Activated B cell treated with CpG ODN at 0.5 μM for 24 hours (primary cell): ENCODE measurements at regions of chr2 and their contacts with region 1.

Region 1: DNA sequence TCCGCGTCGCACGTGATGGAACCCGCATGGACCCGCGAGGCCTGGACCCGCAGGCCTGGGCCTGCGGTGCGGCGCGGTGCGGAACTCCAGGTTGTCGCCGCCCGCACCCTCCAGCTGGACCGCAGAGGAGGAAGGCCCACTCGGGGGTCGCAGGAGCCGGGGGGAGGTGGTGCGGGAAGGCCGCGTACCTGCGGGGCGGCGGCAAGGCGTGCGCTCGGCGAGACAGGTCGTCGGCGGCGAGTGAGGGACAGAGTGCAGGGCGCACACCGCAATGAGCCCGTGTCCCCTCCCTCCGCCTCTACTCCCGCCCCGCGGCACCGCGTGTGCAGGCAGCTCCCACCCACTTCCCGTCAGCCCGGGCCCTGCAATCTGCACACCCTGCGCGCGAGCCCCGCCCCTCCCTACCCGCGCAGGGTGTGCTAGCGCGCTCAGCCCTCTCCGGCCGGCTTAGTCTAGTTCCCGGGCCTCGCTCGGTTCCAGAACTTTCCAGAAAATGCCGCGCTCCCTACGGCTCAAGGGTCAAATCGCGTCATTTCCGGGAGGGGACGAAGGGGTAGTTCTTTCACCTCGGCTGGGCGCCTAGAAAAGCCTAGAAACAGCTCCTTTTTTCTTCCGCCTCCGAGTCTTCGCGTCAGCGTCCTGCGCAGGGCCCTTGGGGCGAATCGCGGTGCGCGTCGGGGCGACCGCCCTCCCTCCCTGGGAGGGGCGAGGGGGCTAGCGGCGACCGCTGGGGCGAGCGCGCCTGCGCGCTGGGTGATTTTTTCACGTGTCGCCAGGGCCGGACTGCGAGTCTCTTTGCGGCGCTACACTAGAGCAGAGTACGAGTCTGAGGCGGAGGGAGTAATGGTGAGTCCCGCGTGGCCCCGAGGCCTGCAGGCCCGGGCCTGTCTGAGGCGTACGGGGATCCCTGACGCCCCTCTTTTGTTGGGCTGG is at the starts of genes HSPD1 and HSPE1:
- DNase-seq: peak; percentile 93
- ATAC-seq: peak; percentile 84
- H3K4me3 Mint-ChIP-seq: peak within 1 kb of the TSS; percentile 97
- H3K27ac Mint-ChIP-seq: peak within 1 kb of the TSS; percentile 94
- H3K4me1 Mint-ChIP-seq: peaks cover 59% of the 10 kb centered on the region
- H3K27me3 Mint-ChIP-seq: no peaks in the 10 kb centered on the region
- CTCF ChIP-seq: no peak
- total RNA-seq, gene HSPD1: 250 and 252 TPM in 2 replicates
- total RNA-seq, gene HSPE1: 108 and 116 TPM in 2 replicates

Region 2: GRCh38 chr2:196639180-196640030 is 860.5 kb before region 1 on chr2 and contains the start of gene CCDC150:
- CTCF ChIA-PET with region 1: no interaction called
- POLR2A ChIA-PET with region 1: interaction called, 3 read pairs
- intact Hi-C with region 1: loop called (anchors 1 kb)
- DNase-seq: peak; percentile 90
- ATAC-seq: peak; percentile 100
- H3K4me3 Mint-ChIP-seq: peak within 1 kb of the TSS; percentile 89
- H3K27ac Mint-ChIP-seq: peak within 1 kb of the TSS; percentile 53
- H3K4me1 Mint-ChIP-seq: peaks cover 14% of the 10 kb centered on the region
- H3K27me3 Mint-ChIP-seq: no peaks in the 10 kb centered on the region
- CTCF ChIP-seq: no peak
- total RNA-seq, gene CCDC150: 2.3 and 2.6 TPM in 2 replicates

Region 3: GRCh38 chr2:196926562-196927375 is 573.1 kb before region 1 on chr2 and contains the start of gene PGAP1:
- CTCF ChIA-PET with region 1: no interaction called
- POLR2A ChIA-PET with region 1: no interaction called
- intact Hi-C with region 1: loop called (anchors 5 kb)
- DNase-seq: peak; percentile 82
- ATAC-seq: peak; percentile 91
- H3K4me3 Mint-ChIP-seq: peak within 1 kb of the TSS; percentile 90
- H3K27ac Mint-ChIP-seq: peak within 1 kb of the TSS; percentile 86
- H3K4me1 Mint-ChIP-seq: peaks cover 21% of the 10 kb centered on the region
- H3K27me3 Mint-ChIP-seq: peaks cover 13% of the 10 kb centered on the region
- CTCF ChIP-seq: no peak
- total RNA-seq, gene PGAP1: 1.9 and 2.9 TPM in 2 replicates

Region 4: GRCh38 chr2:197453161-197453914 is 46.5 kb before region 1 on chr2 and contains the start of gene COQ10B:
- CTCF ChIA-PET with region 1: no interaction called
- POLR2A ChIA-PET with region 1: interaction called, 77 read pairs
- intact Hi-C with region 1: loop called (anchors 1 kb)
- DNase-seq: peak; percentile 91
- ATAC-seq: peak; percentile 88
- H3K4me3 Mint-ChIP-seq: peak within 1 kb of the TSS; percentile 91
- H3K27ac Mint-ChIP-seq: peak within 1 kb of the TSS; percentile 94
- H3K4me1 Mint-ChIP-seq: peaks cover 45% of the 10 kb centered on the region
- H3K27me3 Mint-ChIP-seq: no peaks in the 10 kb centered on the region
- CTCF ChIP-seq: no peak
- total RNA-seq, gene COQ10B: 25.1 and 27.5 TPM in 2 replicates

Region 5: DNA sequence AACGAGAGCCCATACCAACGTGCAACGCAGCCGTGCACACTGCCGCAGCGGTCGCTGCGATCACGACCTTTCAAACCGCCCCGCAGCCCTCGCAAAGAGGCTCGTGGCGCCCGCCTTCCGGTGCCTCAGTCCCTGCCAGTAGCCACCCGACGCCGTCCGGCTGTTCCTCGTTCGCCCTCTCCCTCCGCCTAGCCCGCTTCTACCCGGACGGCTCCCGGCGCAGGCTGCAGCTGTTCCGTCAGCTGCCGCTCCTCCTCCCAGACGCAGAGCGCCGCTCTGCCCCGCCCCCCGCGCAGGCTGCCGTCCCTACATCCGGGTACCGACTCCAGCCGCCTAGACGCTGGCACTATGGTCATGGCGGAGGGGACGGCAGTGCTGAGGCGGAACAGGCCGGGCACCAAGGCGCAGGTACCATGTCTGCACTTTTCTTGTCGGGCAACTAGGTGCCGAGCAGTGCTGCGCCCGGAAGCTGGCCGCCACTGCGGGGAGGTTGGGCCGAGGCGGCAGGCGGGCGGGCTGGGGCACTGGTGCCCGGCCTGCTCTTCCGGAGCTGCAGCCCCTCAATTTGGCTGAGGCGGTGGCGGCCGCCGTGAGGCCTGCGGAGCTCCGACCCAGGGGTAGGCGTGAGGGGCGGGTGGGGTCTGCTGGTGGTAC is 16.0 kb after region 1 on chr2 and contains the start of gene MOB4:
- CTCF ChIA-PET with region 1: no interaction called
- POLR2A ChIA-PET with region 1: interaction called, 173 read pairs
- intact Hi-C with region 1: loop called (anchors 1 kb)
- DNase-seq: peak; percentile 96
- ATAC-seq: peak; percentile 95
- H3K4me3 Mint-ChIP-seq: peak within 1 kb of the TSS; percentile 96
- H3K27ac Mint-ChIP-seq: peak within 1 kb of the TSS; percentile 95
- H3K4me1 Mint-ChIP-seq: peaks cover 33% of the 10 kb centered on the region
- H3K27me3 Mint-ChIP-seq: no peaks in the 10 kb centered on the region
- CTCF ChIP-seq: no peak
- total RNA-seq, gene MOB4: 21.7 and 22.1 TPM in 2 replicates

Region 6: GRCh38 chr2:197705121-197705911 is 205.5 kb after region 1 on chr2 and contains the start of gene MARS2:
- CTCF ChIA-PET with region 1: no interaction called
- POLR2A ChIA-PET with region 1: interaction called, 10 read pairs
- intact Hi-C with region 1: loop called (anchors 1 kb)
- DNase-seq: peak; percentile 89
- ATAC-seq: peak; percentile 92
- H3K4me3 Mint-ChIP-seq: peak within 1 kb of the TSS; percentile 89
- H3K27ac Mint-ChIP-seq: peak within 1 kb of the TSS; percentile 89
- H3K4me1 Mint-ChIP-seq: peaks cover 41% of the 10 kb centered on the region
- H3K27me3 Mint-ChIP-seq: peaks cover 14% of the 10 kb centered on the region
- CTCF ChIP-seq: no peak
- total RNA-seq, gene MARS2: 14.6 and 15.4 TPM in 2 replicates

Region 7: DNA sequence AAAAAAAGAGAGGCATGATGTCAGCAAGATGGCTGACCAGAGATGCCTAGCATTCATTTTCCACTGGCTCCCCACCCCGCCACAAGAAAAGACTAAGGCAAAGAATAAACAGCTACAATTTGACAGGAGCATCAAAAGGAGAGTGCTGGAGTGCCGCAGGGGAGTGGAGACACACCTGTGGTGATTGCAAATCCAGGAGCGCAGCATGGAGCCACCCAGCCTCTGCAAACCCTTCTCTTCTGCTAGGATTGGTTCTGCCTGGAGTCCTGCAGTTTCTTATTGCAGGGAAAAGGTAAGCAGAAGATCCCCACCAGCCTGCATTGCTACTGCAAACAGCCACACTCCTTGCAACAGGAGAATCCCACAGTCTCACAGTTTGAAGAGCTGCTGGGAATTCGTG is 259.2 kb after region 1 on chr2:
- CTCF ChIA-PET with region 1: no interaction called
- POLR2A ChIA-PET with region 1: no interaction called
- intact Hi-C with region 1: no loop called
- DNase-seq: no peak
- ATAC-seq: no peak
- H3K4me3 Mint-ChIP-seq: no peak overlapping the region
- H3K27ac Mint-ChIP-seq: no peak overlapping the region
- H3K4me1 Mint-ChIP-seq: no peaks in the 10 kb centered on the region
- H3K27me3 Mint-ChIP-seq: peaks cover 15% of the 10 kb centered on the region
- CTCF ChIP-seq: no peak

Region 8: DNA sequence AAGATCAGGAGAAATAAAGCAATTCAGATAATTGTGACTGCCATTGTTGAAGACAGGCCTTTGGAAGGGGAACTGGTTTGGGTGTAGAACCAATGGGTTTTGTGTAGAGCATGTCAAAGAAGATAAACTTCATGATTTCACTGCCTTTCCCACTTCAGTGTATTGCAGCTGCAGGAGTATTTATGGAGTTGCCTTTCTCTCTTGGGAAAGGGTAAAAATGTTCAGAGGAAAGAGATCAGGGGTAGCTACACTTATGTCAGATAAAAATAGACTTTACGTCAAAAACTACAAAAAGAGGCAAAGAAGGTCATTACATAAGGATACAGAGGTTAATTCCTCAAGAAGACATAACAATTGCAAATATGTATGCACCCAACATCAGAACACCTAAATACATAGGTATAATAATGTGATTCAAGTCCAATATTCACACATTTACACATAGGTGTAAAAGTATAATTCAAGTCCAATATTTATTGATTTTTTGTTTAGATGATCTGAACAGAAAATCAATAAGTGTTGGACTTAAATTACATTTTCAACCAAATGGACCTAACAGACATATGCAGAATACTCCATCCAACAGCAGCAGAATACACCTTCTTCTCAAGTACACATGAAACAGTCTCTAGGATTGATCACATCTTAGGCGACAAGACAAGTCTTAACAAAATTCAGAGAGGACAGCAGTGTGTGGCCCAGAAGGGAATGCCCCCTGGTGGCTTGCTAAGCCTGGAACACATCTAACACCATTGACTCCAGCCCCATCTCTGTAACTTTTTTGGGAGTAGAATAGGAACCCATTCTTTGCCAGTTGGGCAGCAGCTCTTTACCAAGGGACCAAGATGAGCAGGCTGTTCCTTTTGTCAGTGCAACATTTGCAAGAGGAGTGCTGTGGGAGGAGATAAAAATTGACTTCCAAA is 554.2 kb after region 1 on chr2:
- CTCF ChIA-PET with region 1: no interaction called
- POLR2A ChIA-PET with region 1: no interaction called
- intact Hi-C with region 1: no loop called
- DNase-seq: no peak
- ATAC-seq: no peak
- H3K4me3 Mint-ChIP-seq: no peak overlapping the region
- H3K27ac Mint-ChIP-seq: no peak overlapping the region
- H3K4me1 Mint-ChIP-seq: no peaks in the 10 kb centered on the region
- H3K27me3 Mint-ChIP-seq: no peaks in the 10 kb centered on the region
- CTCF ChIP-seq: no peak

Region 9: GRCh38 chr2:198296665-198297308 is 796.9 kb after region 1 on chr2:
- CTCF ChIA-PET with region 1: no interaction called
- POLR2A ChIA-PET with region 1: no interaction called
- intact Hi-C with region 1: loop called (anchors 5 kb)
- DNase-seq: no peak
- ATAC-seq: peak; percentile 64
- H3K4me3 Mint-ChIP-seq: no peak overlapping the region
- H3K27ac Mint-ChIP-seq: no peak overlapping the region
- H3K4me1 Mint-ChIP-seq: peaks cover 4% of the 10 kb centered on the region
- H3K27me3 Mint-ChIP-seq: peaks cover 2% of the 10 kb centered on the region
- CTCF ChIP-seq: peak; percentile 83